ENCODE measurements at regions of chr21 and their contacts with region 1.

Region 1: DNA sequence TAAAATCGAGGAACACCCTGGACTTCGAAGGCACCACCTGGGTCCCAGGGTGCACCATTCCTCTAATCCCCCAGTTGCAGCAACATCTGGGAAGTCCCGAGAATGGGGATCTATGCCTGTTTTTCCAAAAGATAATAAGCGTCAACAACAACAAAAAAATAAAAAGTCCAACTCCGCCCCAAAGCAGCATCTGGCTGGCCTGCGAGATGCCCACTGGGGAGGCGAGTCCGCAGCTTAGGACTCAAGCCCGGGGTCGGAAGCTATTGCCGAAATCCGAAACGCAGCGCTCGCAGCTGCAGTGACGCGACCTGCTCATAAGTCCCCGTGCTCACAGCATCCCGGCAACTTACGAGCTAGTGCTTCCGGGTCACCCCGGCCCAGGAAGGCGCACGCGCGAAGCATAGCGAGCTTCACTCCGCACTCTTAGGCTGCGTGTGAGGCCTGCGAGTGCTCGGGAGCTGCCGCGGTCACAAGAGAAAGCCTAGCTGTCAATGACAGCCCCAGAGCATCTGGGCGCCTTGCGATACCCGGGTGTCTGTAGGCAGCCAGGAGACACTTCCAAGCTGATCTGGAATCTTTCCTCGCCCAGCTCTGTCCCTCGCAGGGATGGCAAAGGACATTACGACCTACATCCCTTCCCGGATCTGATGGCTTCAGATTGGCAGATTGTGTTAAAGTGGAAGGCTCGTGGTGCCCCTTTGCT is 9.9 kb upstream of the LTN1 start:
- H3K4me3 ChIP-seq: peak overlapping the region; percentile 55
- H3K27ac ChIP-seq: peak overlapping the region; percentile 94
- H3K4me1 ChIP-seq: no peaks in the 10 kb centered on the region; the same call in 1 of the 2 replicates
- CTCF ChIP-seq: peak; percentile 14; the same call in 1 of the 2 replicates

Region 2: GRCh38 chr21:28871388-28872010 is 131.1 kb before region 1 on chr21:
- CTCF ChIA-PET with region 1: no interaction called
- POLR2A ChIA-PET with region 1: interaction called, 12 read pairs
- H3K4me3 ChIP-seq: no peak overlapping the region
- H3K27ac ChIP-seq: no peak overlapping the region
- H3K4me1 ChIP-seq: no peaks in the 10 kb centered on the region
- CTCF ChIP-seq: no peak

Region 3: DNA sequence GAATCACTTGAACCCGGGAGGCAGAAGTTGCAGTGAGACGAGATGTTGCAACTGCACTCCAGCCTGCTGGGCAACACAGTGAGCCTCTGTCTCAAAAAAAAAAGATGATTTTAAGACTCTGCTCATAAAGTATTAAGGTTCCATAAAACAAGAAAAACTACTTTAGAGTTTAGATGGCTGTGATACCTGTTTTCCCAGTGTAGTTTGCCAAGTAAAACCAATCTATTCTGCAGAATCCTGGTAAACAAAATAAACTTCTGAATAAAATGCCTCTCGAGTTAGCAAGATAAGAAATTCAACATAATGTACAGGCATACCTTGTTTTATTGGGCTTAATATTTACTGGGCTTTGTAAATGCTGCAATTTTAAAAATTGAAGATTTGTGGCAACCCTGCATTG is 40.7 kb before region 1 on chr21:
- CTCF ChIA-PET with region 1: no interaction called
- POLR2A ChIA-PET with region 1: interaction called, 12 read pairs
- H3K4me3 ChIP-seq: no peak overlapping the region
- H3K27ac ChIP-seq: no peak overlapping the region
- H3K4me1 ChIP-seq: no peaks in the 10 kb centered on the region
- CTCF ChIP-seq: no peak

Region 4: DNA sequence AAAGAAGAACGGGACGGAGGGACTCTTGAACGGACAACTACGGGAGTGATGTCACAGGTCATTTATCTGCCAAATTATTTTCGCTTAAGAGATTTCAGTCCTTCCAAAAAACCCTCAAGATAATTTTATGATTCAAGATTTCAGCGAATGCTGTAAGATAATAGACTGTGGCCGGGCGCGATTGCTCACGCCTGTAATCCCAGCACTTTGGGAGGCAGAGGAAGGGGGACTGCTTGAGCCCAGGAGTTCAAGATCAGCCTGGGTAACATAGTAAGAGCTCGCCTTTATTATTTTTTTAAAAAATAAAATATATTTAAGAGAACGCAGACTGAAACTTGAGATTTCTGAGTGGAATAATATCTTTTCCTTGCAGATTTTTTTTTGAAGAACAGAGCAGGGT is 15.9 kb after region 1 on chr21:
- CTCF ChIA-PET with region 1: interaction called, 3 read pairs
- POLR2A ChIA-PET with region 1: interaction called, 100 read pairs
- H3K4me3 ChIP-seq: peak overlapping the region; percentile 90
- H3K27ac ChIP-seq: peak overlapping the region; percentile 77; the same call in 1 of the 2 replicates
- H3K4me1 ChIP-seq: no peaks in the 10 kb centered on the region
- CTCF ChIP-seq: no peak

Region 5: GRCh38 chr21:29024474-29025327 is 22.1 kb after region 1 on chr21 and contains the start of gene USP16:
- CTCF ChIA-PET with region 1: no interaction called
- POLR2A ChIA-PET with region 1: interaction called, 100 read pairs
- H3K4me3 ChIP-seq: peak within 1 kb of the TSS; percentile 84
- H3K27ac ChIP-seq: peak within 1 kb of the TSS; percentile 89
- H3K4me1 ChIP-seq: peaks cover 5% of the 10 kb centered on the region; the same call in 1 of the 2 replicates
- CTCF ChIP-seq: peak; percentile 51; the same call in 1 of the 2 replicates

Region 6: DNA sequence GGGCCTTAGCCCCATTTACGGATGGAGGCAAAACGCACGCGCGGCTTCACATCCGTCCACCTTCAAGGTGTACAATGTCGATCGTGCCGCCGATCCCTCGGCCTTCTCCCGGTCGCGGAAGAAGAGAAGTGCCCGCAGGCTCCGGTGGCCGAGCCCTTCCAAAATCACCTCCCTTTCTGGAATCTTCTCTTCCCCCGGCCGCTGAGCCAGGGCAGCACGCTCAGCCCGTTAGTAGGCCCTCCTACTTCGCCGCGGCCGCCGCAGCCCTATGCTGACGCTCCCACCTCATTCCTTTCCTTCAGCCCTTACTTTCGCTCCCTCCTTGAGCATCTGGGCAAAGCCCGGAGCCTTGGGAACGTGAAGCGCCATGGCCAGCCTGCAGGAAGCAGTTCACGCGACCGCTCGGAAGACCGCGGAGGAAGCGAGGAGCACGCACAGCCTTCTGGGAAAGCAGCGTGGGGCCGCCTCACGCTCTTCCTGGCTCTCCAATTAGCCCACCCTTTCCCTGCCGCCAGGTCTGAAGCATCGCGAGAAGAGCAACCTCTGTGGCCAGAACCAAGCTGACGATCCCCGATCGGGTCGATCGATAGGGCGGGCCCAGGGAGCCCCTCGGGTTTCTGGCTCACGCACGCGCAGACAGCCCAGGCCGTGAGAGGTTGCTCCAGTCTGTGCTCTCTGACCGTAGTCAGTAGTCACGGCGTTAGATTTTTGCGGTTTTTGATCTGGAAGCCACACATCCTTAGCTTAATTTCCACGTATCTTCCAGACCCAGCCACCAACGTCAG is 70.8 kb after region 1 on chr21 and contains the start of gene CCT8:
- CTCF ChIA-PET with region 1: no interaction called
- POLR2A ChIA-PET with region 1: interaction called, 22 read pairs
- H3K4me3 ChIP-seq: peak within 1 kb of the TSS; percentile 85
- H3K27ac ChIP-seq: peak within 1 kb of the TSS; percentile 82
- H3K4me1 ChIP-seq: peaks cover 15% of the 10 kb centered on the region; the same call in 1 of the 2 replicates
- CTCF ChIP-seq: no peak

Region 7: DNA sequence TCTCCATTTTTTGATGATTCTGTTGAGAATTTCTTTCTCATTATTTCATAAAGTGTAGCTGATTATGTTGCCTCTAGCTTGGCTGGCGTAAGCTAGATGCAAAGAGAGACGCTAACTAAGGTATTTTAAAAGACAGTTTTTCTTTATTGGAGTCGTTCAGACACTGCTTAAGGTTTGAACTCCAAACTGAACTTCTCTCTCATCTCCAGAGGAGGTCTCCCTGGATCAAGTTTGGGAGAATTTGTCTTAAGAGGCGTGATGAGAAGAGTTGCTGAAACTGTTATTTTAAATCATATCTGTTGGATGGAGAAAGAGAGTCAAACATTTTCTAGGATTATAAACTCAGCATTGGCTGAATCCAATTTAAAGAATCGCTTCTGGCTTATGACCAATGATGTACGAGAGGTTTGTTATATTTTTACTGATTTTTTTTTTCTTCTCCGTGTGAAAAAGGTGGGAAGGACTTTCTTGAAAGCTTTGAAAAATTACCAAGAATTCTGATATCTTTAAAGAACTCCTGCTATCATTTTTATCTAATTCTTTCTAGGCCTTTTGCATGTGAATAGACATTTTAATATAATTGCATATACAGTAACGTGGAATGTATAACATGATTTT is 161.8 kb after region 1 on chr21:
- CTCF ChIA-PET with region 1: no interaction called
- POLR2A ChIA-PET with region 1: no interaction called
- H3K4me3 ChIP-seq: no peak overlapping the region
- H3K27ac ChIP-seq: no peak overlapping the region
- H3K4me1 ChIP-seq: no peaks in the 10 kb centered on the region
- CTCF ChIP-seq: no peak

Region 8: DNA sequence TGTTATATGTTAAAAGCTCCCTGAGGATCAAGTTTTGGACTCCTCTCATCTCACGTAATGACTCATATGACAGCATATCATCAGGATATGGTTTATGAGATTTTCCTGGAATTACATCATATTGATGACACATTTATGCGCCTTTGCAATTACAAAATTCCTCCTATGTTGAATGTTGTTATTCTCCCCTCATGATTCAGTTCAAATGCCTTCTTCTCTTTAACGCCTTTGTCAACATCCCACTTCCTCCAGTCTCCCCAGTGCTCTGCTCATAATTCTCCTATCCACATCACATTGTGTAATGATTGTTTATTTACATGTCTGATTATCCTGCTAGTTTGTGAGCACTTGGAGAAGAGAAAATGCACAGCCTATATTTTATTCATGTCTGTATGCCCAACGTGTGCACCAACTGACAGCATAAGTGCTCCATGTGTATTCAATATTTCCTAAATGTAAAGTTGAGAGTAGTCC is 215.3 kb after region 1 on chr21:
- CTCF ChIA-PET with region 1: no interaction called
- POLR2A ChIA-PET with region 1: no interaction called
- H3K4me3 ChIP-seq: no peak overlapping the region
- H3K27ac ChIP-seq: no peak overlapping the region
- H3K4me1 ChIP-seq: peaks cover 11% of the 10 kb centered on the region
- CTCF ChIP-seq: no peak